ENCODE measurements at regions of chr14 and their contacts with region 1.

Region 1: GRCh38 chr14:71320107-71320733 is 413.0 kb downstream of the PCNX1 start:
- DNase-seq: peak; percentile 99
- ATAC-seq: peak; percentile 91
- H3K4me3 ChIP-seq: peak within 1 kb of the TSS; percentile 96
- H3K27ac ChIP-seq: peak within 1 kb of the TSS; percentile 91
- H3K4me1 ChIP-seq: peaks cover 5% of the 10 kb centered on the region
- H3K27me3 ChIP-seq: no peaks in the 10 kb centered on the region
- CTCF ChIP-seq: no peak
- POLR2A ChIP-seq: peak; percentile 94
- RAD21 ChIP-seq: peak; percentile 12

Region 2: GRCh38 chr14:71050204-71050823 is 269.9 kb before region 1 on chr14:
- CTCF ChIA-PET with region 1: no interaction called
- POLR2A ChIA-PET with region 1: no interaction called
- dilution Hi-C with region 1: no loop called
- in situ Hi-C with region 1: no loop called
- intact Hi-C with region 1: no loop called
- DNase-seq: peak; percentile 20
- ATAC-seq: peak; percentile 35; the same call in 1 of the 2 replicates
- H3K4me3 ChIP-seq: no peak overlapping the region
- H3K27ac ChIP-seq: no peak overlapping the region
- H3K4me1 ChIP-seq: peaks cover 2% of the 10 kb centered on the region; the same call in 1 of the 2 replicates
- H3K27me3 ChIP-seq: no peaks in the 10 kb centered on the region
- CTCF ChIP-seq: peak; percentile 31
- POLR2A ChIP-seq: no peak
- RAD21 ChIP-seq: 0 out of 2 replicates have a peak, but pooled peaks have one; percentile 3

Region 3: GRCh38 chr14:71138448-71139293 is 181.5 kb before region 1 on chr14:
- CTCF ChIA-PET with region 1: interaction called, 7 read pairs
- POLR2A ChIA-PET with region 1: no interaction called
- dilution Hi-C with region 1: no loop called
- in situ Hi-C with region 1: loop called (anchors 10 kb)
- intact Hi-C with region 1: loop called (anchors 1 kb)
- DNase-seq: peak; percentile 48
- ATAC-seq: peak; percentile 73
- H3K4me3 ChIP-seq: no peak overlapping the region
- H3K27ac ChIP-seq: no peak overlapping the region
- H3K4me1 ChIP-seq: peaks cover 16% of the 10 kb centered on the region
- H3K27me3 ChIP-seq: no peaks in the 10 kb centered on the region
- CTCF ChIP-seq: peak; percentile 86
- POLR2A ChIP-seq: peak; percentile 57; the same call in 1 of the 2 replicates
- RAD21 ChIP-seq: peak; percentile 97

Region 4: DNA sequence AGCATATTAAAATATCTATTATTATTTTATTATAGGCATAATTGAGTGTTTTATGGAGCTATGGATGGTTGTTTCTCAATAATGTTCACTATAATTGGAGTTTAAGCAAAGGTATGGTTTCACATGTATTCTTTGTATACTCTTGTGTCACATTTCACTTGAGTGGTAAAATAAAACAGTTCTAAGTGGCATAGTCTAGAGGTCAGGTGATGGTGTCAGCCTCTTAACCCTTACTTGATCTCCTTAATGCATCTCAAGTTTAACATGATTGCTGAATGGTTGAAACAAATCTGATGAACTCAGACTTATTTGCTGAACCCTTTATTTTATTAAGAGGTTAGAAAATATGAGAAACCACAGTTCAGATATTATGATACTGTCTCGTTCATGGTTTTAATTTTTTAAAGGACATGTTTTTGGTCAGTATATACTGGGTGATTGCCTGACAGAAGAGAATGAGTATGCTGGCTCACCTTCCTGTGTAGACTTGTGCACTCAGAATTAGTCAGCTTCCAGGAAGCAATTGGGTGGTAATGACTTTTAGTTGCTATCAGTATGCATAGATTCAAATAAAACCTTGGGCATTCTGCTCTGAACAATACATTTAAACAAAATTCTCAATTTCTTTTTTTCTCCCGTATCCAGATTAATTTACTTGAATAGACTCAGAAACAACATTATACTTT is 51.6 kb after region 1 on chr14:
- CTCF ChIA-PET with region 1: no interaction called
- POLR2A ChIA-PET with region 1: no interaction called
- dilution Hi-C with region 1: no loop called
- in situ Hi-C with region 1: no loop called
- intact Hi-C with region 1: loop called (anchors 5 kb)
- DNase-seq: peak; percentile 75
- ATAC-seq: peak; percentile 84
- H3K4me3 ChIP-seq: no peak overlapping the region
- H3K27ac ChIP-seq: peak overlapping the region; percentile 19; the same call in 1 of the 2 replicates
- H3K4me1 ChIP-seq: no peaks in the 10 kb centered on the region
- H3K27me3 ChIP-seq: no peaks in the 10 kb centered on the region
- CTCF ChIP-seq: no peak
- POLR2A ChIP-seq: no peak
- RAD21 ChIP-seq: no peak

Region 5: DNA sequence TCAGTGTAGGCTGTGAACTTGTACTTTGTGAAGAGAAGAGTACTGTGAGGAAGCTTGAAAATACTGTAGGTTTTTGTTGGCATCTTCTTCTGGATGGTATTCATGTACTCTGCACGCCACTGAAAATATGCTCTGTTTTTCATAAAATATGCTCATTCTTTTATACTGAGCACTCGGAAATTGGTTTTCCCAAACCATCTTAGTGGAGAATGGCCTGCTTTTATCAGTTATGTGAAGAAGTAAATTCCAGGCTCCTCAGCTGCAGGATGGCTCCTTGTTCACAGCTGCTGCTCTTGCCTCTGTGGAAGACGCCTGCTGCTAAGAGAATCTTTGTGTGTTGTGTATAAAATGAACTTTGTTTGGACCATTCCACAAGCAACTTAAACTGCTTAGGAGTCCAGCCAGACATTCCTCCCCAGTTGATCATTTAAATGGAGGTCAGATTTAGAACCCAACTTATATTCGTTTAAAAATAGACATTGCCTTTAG is 168.5 kb after region 1 on chr14:
- CTCF ChIA-PET with region 1: no interaction called
- POLR2A ChIA-PET with region 1: no interaction called
- dilution Hi-C with region 1: no loop called
- in situ Hi-C with region 1: no loop called
- intact Hi-C with region 1: loop called (anchors 5 kb)
- DNase-seq: peak; percentile 90
- ATAC-seq: peak; percentile 74
- H3K4me3 ChIP-seq: no peak overlapping the region
- H3K27ac ChIP-seq: no peak overlapping the region
- H3K4me1 ChIP-seq: peaks cover 22% of the 10 kb centered on the region
- H3K27me3 ChIP-seq: no peaks in the 10 kb centered on the region
- CTCF ChIP-seq: no peak
- POLR2A ChIP-seq: no peak
- RAD21 ChIP-seq: no peak

Region 6: GRCh38 chr14:71638523-71639196 is 318.4 kb after region 1 on chr14:
- CTCF ChIA-PET with region 1: no interaction called
- POLR2A ChIA-PET with region 1: no interaction called
- dilution Hi-C with region 1: no loop called
- in situ Hi-C with region 1: no loop called
- intact Hi-C with region 1: loop called (anchors 5 kb)
- DNase-seq: peak; percentile 75
- ATAC-seq: peak; percentile 91
- H3K4me3 ChIP-seq: no peak overlapping the region
- H3K27ac ChIP-seq: peak overlapping the region; percentile 20; the same call in 1 of the 2 replicates
- H3K4me1 ChIP-seq: peaks cover 6% of the 10 kb centered on the region; the same call in 1 of the 2 replicates
- H3K27me3 ChIP-seq: no peaks in the 10 kb centered on the region
- CTCF ChIP-seq: no peak
- POLR2A ChIP-seq: no peak
- RAD21 ChIP-seq: no peak

Region 7: DNA sequence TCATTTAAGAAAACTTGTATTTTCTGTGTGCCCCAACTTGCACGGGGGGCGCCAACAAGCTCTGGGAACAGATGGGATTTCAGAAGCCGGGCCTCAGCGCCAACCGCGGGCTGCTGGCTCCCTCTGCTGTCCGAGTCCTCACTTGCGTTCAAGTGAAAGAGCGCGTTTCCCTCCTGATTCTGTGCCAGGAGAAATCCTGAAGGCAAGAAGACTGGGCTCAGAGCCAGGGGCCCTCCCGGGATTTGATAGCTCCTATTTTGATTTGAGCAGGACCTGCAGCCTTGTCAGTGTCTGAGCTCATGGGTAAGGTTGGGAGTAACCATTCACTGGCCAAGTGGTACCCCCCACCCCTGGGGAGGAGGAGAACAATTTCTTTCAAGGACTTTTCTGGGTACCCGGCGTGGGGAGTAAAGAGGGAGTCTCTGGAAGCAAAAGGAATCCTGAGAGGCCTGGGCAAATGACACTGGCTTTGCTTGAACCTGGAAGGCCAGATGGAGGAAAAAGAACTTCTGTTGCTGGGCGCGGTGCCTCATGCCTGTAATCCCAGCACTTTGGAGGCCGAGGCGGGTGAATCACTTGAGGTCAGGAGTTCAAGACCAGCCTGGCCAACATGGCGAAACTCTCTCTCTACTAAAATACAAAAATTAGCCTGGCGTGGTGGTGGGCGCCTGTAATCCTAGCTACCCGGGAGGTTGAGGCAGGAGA is 433.1 kb after region 1 on chr14:
- CTCF ChIA-PET with region 1: interaction called, 3 read pairs
- POLR2A ChIA-PET with region 1: interaction called, 4 read pairs
- dilution Hi-C with region 1: no loop called
- in situ Hi-C with region 1: no loop called
- intact Hi-C with region 1: loop called (anchors 1 kb)
- DNase-seq: peak; percentile 85
- ATAC-seq: peak; percentile 90
- H3K4me3 ChIP-seq: no peak overlapping the region; the same call in 1 of the 2 replicates
- H3K27ac ChIP-seq: no peak overlapping the region
- H3K4me1 ChIP-seq: peaks cover 4% of the 10 kb centered on the region; the same call in 1 of the 2 replicates
- H3K27me3 ChIP-seq: no peaks in the 10 kb centered on the region
- CTCF ChIP-seq: peak; percentile 97
- POLR2A ChIP-seq: peak; percentile 64
- RAD21 ChIP-seq: peak; percentile 100